ENCODE measurements at regions of chr7 and their contacts with region 1.

Region 1: DNA sequence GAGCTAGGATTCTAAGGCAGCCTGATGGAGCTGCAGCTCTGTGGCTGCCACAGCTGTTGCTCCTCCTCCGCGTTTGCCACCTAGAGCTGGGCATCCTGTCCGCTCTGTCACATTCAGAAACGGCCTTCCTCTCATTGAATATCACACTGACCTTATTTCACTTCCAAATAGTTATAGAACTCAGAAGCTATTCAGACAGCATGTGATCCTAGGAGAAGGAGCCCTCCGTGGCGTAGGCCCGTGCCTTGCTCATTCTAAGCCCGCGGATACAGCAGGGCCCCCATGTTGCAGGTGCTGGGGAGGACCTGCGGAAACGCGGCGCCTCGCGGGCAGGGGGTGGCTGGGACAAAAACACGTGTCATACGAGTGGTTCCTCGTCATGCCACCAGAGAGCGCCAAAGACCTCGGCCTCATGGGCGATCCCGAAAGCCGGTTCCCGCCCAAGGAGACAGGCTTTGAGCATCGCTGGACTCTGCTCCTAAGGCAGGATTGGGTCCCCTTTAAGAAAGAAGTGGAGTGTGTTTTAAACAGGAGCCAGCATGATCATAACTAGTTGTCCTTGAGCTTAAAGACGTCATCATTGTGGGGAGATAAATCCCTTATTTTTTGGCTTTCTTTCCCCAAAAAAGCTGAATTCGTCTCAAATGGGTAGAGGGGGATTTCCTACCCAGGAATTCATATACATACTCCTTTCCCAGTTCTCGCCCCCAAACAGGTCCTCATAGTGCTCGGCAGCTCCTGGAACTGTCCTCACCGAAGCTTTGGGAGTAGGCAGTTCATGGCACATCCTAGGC is 17.9 kb upstream of the FIGNL1 start:
- DNase-seq: no peak
- H3K4me3 ChIP-seq: peak overlapping the region in 1 of 2 donors; percentile 30
- H3K27ac ChIP-seq: no peak overlapping the region
- H3K4me1 ChIP-seq: no peaks in the 10 kb centered on the region
- H3K27me3 ChIP-seq: no peaks in the 10 kb centered on the region
- CTCF ChIP-seq: peak; percentile 79 to 95 (median 89)
- POLR2A ChIP-seq: no peak

Region 2: DNA sequence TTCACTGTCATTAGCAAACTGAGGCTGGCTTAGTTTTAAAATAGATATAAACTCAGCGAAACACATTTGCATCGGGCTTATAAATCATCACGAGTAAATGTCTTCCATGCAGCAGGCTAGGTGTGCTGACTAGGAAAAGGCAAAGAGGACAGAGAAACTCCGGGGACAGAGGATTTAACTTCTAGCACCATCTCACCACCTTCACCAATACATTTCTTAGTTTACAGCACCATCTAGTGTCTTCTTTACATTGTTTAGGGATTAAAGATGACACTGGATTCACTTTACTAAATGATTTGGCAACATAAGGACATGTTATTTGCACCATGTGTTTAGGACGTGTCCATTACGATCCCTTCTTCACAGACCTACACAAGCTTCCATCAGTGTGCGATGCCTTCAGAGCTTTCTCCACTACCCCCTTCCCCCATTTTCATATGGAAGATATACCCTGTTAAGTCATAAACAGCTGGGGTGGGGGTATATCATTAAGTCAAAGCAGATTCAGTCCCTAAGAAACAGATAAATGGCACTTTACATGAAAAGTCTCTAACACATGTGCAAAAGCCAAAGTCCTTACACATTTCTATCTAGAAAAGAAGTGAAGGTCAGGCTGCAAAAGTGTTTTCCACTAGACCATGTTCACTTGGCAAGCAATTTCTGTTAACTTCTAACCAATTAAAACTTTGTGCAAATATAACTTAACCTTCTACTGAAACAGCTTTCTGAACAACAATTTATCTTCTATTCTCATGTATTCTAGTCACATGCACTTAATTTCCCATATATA is 211.4 kb after region 1 on chr7:
- intact Hi-C with region 1: loop called (anchors 10 kb)
- DNase-seq: no peak
- H3K4me3 ChIP-seq: no peak overlapping the region
- H3K27ac ChIP-seq: no peak overlapping the region
- H3K4me1 ChIP-seq: peaks cover 25% of the 10 kb centered on the region
- H3K27me3 ChIP-seq: no peaks in the 10 kb centered on the region
- CTCF ChIP-seq: peak in 1 of 3 experiments; percentile 36
- POLR2A ChIP-seq: no peak

Measured in vagina (tissue), 2 donors.